Esophagus squamous epithelium (tissue), 5 donors: ENCODE measurements at regions of chr5 and their contacts with region 1.

Region 1: GRCh38 chr5:173615884-173616576 is 420 bp downstream of the BOD1 start:
- DNase-seq: no peak
- H3K4me3 ChIP-seq: peak overlapping the region; percentile 84 to 91 (median 88)
- H3K27ac ChIP-seq: peak overlapping the region; percentile 92 to 97 (median 94)
- H3K4me1 ChIP-seq: peaks cover 11 to 50% (median 21%) of the 10 kb centered on the region in 3 donors
- H3K27me3 ChIP-seq: no peaks in the 10 kb centered on the region
- CTCF ChIP-seq: peak; percentile 40 to 63 (median 50)
- POLR2A ChIP-seq: peak in 2 of 4 donors; percentile 6 to 18

Region 2: GRCh38 chr5:173969167-173970049 is 353.4 kb after region 1 on chr5:
- intact Hi-C with region 1: loop called (anchors 2 kb)
- DNase-seq: no peak
- H3K4me3 ChIP-seq: no peak overlapping the region
- H3K27ac ChIP-seq: no peak overlapping the region
- H3K4me1 ChIP-seq: peaks cover 3 to 15% (median 9%) of the 10 kb centered on the region in 3 donors
- H3K27me3 ChIP-seq: peaks cover 0 to 14% (median 0%) of the 10 kb centered on the region in 4 donors
- CTCF ChIP-seq: no peak
- POLR2A ChIP-seq: no peak

Region 3: DNA sequence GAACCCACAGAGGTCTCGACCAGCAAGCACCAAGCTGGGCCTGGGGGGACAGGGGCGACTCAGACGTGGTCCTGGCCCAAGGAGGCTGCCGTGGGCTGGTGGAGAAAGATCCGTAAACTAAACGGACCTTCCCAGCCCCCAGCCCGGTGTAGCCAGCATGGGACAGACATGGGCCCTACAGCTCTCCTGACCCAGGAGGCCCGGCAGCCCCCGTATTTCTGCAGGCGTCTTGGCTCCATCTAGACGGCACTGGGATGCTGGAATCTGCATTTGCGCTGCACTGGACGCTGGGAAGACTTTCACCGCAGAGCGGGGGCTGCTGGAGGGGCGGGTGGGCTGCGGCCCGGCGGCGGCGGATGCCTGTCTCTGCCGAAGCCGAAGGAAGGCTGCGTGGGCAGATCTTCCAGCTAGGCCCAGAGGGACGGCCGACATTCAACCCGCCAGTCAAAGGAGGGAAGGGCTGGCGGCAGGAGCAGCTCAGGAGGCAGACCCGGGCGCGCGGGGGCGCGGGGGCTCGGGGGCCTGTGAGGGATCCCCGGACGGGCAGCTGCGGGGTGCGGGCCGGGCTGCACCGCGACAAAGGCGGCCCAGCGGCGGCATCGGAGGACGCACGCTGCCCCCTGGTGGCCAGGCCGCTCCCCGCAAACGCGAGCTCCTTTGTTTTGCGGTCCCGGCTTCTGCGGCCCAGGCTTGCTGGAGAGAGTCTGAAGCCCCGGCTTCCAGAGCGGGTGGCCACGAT is 695.7 kb after region 1 on chr5:
- intact Hi-C with region 1: loop called (anchors 5 kb)
- DNase-seq: no peak
- H3K4me3 ChIP-seq: peak overlapping the region; percentile 3 to 65 (median 34)
- H3K27ac ChIP-seq: no peak overlapping the region
- H3K4me1 ChIP-seq: peaks cover 3 to 11% (median 3%) of the 10 kb centered on the region in 3 donors
- H3K27me3 ChIP-seq: peaks cover 0 to 77% (median 0%) of the 10 kb centered on the region in 4 donors
- CTCF ChIP-seq: peak; percentile 58 to 88 (median 84)
- POLR2A ChIP-seq: no peak